ENCODE measurements at regions of chr3 and their contacts with region 1.

Region 1: DNA sequence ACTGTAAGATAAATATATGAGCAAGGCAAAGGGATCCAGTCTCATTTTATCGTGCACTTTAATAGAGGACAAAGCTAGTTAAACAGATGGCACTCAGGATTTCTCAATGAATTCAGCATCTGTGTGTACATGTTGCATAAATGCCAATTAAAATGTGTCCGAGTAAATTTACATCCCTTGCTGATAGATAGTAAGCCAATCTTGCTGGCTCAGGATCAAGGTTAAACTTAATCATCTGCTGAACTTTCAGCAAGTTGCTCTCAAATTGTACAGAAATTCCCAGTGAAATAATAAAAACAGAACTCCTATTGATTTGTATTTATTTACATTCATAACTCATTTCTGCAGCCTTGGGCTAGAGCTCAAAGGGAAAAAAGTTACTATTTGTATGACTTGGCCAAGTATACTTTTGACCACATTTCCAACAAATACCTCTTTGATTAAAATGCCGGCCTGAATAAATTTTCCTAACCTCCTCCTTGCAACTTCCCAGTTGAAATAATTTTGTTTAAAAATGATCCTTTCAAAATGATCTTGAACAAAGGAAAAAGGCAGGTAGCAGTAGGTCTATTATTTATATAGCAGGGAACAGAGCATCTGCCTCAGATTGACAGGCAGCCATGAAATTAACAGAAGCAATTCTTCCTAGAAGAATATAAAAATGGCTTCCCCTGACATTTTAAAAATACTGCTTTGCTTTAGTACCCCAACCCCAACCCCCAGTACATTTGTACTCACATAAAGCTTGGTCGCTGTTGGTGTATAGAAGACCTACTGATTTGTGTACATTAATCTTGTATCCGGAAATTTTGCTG is 1001.9 kb downstream of the ROBO1 start:
- DNase-seq: no peak
- H3K4me3 ChIP-seq: no peak overlapping the region
- H3K27ac ChIP-seq: no peak overlapping the region
- H3K4me1 ChIP-seq: no peaks in the 10 kb centered on the region
- H3K27me3 ChIP-seq: no peaks in the 10 kb centered on the region
- CTCF ChIP-seq: no peak
- POLR2A ChIP-seq: no peak

Region 2: DNA sequence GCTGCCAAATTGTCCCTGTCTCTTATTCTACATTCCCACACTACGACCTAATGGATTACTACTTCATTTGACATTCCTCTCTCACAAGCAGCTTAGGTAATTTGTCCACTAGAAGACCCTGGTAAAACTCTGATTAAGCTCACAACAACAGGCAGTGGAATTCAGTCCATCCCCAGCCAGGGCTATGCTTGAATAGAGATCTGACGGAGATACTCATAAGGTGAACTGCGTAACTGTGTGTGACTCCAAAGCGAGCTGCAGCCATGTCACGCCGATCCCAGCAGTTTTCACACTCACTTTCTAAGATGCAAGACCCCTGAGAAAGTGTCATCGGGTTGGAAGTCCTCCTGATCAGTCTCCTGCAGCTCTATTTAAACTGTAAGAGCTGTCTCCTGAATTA is 1751.7 kb before region 1 on chr3:
- intact Hi-C with region 1: no loop called
- DNase-seq: no peak
- H3K4me3 ChIP-seq: no peak overlapping the region
- H3K27ac ChIP-seq: no peak overlapping the region
- H3K4me1 ChIP-seq: no peaks in the 10 kb centered on the region
- H3K27me3 ChIP-seq: no peaks in the 10 kb centered on the region
- CTCF ChIP-seq: no peak
- POLR2A ChIP-seq: no peak

Region 3: DNA sequence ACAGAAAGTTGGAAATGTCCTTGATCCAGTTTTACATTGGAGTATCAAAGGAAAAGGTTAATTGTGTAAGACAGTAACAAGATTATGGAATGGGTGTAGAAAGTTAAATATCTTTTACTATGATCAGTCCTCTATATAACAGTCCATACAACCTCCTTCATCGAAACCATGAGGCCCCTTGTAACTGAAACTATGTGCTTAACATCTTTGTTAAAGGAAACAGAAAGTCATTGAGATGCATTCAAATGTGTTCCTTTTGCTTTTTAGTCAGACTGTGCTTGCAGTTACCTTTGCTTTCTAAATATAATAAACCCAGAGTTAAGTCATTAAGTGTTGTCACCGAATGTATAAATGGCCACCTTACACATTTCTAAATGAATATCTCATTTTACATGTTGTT is 427.5 kb before region 1 on chr3:
- intact Hi-C with region 1: loop called (anchors 5 kb)
- DNase-seq: no peak
- H3K4me3 ChIP-seq: no peak overlapping the region
- H3K27ac ChIP-seq: no peak overlapping the region
- H3K4me1 ChIP-seq: no peaks in the 10 kb centered on the region
- H3K27me3 ChIP-seq: no peaks in the 10 kb centered on the region
- CTCF ChIP-seq: no peak
- POLR2A ChIP-seq: no peak

Measured in breast epithelium (tissue), 4 donors.